Activated T-helper 2 cell treated with anti-CD3 and anti-CD28 coated beads, Interferon-gamma antibody, Interleukin-2, Interleukin-4, amounts not matched to agents 10 μg/mL and 5 μg/mL and 100 μg/mL, durations not matched to agents 14 hours and 24 hours and 36 hours (primary cell): ENCODE measurements at regions of chr4 and their contacts with region 1.

Region 1: DNA sequence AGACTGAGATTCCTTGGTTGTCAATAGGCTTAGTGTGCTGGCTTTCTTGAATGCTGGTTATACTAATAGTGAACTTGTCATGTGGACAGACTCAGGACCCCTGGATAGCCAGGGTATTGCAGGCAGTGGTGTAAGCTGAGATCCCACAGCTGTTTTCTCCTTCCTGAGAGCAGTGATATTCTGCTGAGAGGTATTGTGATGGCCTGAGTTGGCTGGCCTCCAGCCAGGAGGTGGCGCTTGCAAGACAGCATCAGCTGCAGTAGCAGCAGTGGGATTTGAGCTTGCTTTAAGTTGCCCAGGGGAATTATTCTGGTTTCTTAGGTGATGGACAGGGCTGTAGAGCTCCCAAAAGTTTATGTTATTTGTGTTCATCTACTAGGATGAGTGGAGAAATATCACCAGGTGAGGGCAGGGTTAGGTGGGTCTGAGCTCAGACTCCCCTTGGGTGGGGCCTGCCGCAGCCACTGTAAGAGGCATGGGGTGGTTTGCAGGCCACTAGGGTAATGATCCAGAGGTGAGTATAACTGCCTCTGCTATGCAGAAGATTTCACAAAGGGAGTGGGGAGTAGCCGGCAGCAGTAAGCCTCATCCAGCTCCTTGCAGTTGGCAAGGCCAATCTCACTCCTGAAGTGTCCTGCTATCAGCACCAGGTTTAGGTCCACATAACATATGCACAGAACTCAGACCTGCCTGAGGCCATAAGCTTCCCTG is 66.2 kb downstream of the IL15 start:
- DNase-seq: no peak
- H3K4me3 Mint-ChIP-seq: no peak overlapping the region
- H3K27ac Mint-ChIP-seq: no peak overlapping the region
- H3K4me1 Mint-ChIP-seq: peaks cover 3% of the 10 kb centered on the region
- H3K27me3 Mint-ChIP-seq: no peaks in the 10 kb centered on the region

Region 2: GRCh38 chr4:140256335-140256734 is 1446.3 kb before region 1 on chr4:
- intact Hi-C with region 1: no loop called
- DNase-seq: no peak
- H3K4me3 Mint-ChIP-seq: no peak overlapping the region
- H3K27ac Mint-ChIP-seq: no peak overlapping the region
- H3K4me1 Mint-ChIP-seq: peaks cover 31% of the 10 kb centered on the region
- H3K27me3 Mint-ChIP-seq: peaks cover 23% of the 10 kb centered on the region

Region 3: DNA sequence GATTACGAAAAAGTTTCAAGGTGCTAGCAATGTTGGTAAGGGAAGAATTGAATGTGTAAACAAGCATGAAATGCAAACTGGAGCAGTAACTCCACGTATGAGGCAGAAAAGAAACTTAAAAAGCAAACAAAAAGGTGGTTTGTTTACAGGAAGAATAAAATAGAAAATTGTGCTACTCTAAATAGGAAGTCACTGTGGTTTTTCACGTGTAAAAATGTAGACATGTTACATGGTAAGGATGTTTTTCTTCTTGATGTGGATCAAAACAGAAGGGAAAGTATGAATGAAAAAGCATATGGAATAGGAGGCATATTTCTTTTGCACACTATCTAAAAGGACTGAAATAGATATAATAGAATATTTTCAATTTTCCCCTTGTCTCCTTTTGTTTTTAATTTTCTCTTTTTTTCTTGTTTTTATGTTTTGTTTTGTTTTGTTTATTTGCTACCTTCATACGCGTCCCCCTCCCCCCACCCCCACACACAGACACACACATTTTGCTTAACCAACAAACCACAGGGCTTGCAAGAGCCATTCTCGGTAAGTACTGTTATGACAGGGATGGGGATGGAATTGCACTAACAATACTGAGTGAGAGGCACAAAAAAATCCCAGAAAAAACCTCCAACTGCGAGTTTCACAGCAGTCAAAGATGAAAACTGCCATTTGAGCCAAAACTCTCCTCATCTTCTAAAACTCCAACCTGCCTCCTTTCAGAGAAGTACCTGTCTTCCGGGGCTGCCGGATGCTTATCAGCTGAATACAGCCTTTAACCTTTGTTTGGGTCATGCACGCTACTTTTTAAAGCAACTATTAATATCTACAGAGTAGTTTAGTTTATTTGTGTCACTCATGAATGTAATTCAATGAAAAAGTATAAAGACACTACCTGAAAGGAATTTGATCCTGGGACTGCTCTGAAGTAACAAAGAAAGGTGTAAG is 69.5 kb after region 1 on chr4:
- intact Hi-C with region 1: loop called (anchors 5 kb)
- DNase-seq: no peak
- H3K4me3 Mint-ChIP-seq: no peak overlapping the region
- H3K27ac Mint-ChIP-seq: peak overlapping the region; percentile 55
- H3K4me1 Mint-ChIP-seq: peaks cover 13% of the 10 kb centered on the region
- H3K27me3 Mint-ChIP-seq: peaks cover 3% of the 10 kb centered on the region

Region 4: DNA sequence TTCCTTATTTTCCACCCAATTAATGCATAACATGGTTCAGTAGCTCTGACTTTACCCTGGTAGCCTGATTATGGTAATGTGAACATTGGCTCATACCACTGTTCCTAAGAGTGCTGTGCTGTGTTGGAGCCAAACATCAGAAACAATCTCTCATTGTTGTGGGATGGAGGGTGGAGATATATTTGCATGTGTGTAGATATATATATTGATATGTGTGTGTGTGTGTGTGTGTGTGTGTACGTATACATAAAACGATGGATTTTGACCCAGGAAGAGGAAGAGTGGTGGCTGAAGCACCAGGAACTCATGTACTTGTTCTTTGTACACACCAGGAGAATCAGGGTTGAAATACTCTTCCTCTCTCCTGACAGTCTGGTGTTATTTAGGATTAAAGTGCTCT is 181.4 kb after region 1 on chr4:
- intact Hi-C with region 1: no loop called
- DNase-seq: no peak
- H3K4me3 Mint-ChIP-seq: no peak overlapping the region
- H3K27ac Mint-ChIP-seq: no peak overlapping the region
- H3K4me1 Mint-ChIP-seq: no peaks in the 10 kb centered on the region
- H3K27me3 Mint-ChIP-seq: no peaks in the 10 kb centered on the region

Region 5: GRCh38 chr4:141912831-141913230 is 210.2 kb after region 1 on chr4:
- intact Hi-C with region 1: no loop called
- DNase-seq: no peak
- H3K4me3 Mint-ChIP-seq: no peak overlapping the region
- H3K27ac Mint-ChIP-seq: no peak overlapping the region
- H3K4me1 Mint-ChIP-seq: no peaks in the 10 kb centered on the region
- H3K27me3 Mint-ChIP-seq: no peaks in the 10 kb centered on the region

Region 6: GRCh38 chr4:142120921-142121320 is 418.3 kb after region 1 on chr4:
- intact Hi-C with region 1: no loop called
- DNase-seq: no peak
- H3K4me3 Mint-ChIP-seq: no peak overlapping the region
- H3K27ac Mint-ChIP-seq: no peak overlapping the region
- H3K4me1 Mint-ChIP-seq: peaks cover 26% of the 10 kb centered on the region
- H3K27me3 Mint-ChIP-seq: no peaks in the 10 kb centered on the region